ENCODE measurements at regions of chr10 and their contacts with region 1.

Region 1: DNA sequence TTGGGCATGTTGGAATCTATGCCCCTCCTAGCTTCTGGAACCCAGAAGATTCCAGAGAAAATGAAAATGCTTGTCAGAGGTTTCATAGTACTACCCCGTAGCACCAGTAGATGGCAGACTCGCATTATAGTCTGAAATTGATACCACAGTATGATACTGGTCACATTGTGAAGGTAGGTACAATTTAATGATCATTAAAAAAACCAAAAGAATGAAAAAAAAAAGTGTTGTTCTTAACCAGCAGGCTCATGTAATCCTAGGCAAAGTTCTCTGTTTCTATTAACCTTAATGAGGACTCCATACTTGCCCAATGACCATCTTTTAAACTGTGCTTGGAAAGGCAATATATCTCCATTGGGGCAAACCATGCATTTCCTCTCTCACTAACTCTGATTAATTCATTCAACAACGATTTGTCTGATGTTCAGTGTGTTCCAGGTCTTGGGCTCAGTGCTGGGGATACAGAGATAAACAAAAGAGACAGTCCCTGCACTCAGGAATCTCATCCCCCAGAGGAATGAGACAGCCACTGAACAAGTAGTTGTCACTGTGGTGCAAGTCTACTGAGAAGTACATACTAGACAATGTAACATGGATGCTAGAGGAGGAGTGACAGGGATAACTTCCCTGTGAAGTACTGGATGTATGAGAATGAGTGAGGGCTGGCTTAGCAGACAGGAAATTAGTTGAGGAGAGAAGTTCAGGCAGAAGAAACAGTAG is 223.5 kb upstream of the PHYHIPL start:
- DNase-seq: peak in 1 of 2 donors; percentile 70
- H3K4me3 ChIP-seq: no peak overlapping the region
- H3K27ac ChIP-seq: peak overlapping the region; percentile 8 to 9
- H3K4me1 ChIP-seq: peaks cover 0 to 8% (median 0%) of the 10 kb centered on the region in 4 donors
- H3K27me3 ChIP-seq: no peaks in the 10 kb centered on the region
- CTCF ChIP-seq: peak; percentile 80 to 92

Region 2: GRCh38 chr10:59181668-59182067 is 228.8 kb after region 1 on chr10:
- intact Hi-C with region 1: loop called (anchors 5 kb)
- DNase-seq: no peak
- H3K4me3 ChIP-seq: no peak overlapping the region
- H3K27ac ChIP-seq: no peak overlapping the region
- H3K4me1 ChIP-seq: peaks cover 0 to 7% (median 5%) of the 10 kb centered on the region in 4 donors
- H3K27me3 ChIP-seq: peaks cover 2 to 11% of the 10 kb centered on the region in 2 donors
- CTCF ChIP-seq: peak; percentile 45 to 68

Region 3: GRCh38 chr10:59234816-59235429 is 282.0 kb after region 1 on chr10:
- intact Hi-C with region 1: loop called (anchors 10 kb)
- DNase-seq: no peak
- H3K4me3 ChIP-seq: no peak overlapping the region
- H3K27ac ChIP-seq: no peak overlapping the region
- H3K4me1 ChIP-seq: no peaks in the 10 kb centered on the region
- H3K27me3 ChIP-seq: no peaks in the 10 kb centered on the region
- CTCF ChIP-seq: peak; percentile 46 to 47

Measured in tibial artery (tissue), 4 donors.